Activated CD8-positive, alpha-beta T cell treated with anti-CD3 and anti-CD28 coated beads for 36 hours (primary cell): ENCODE measurements at regions of chr3 and their contacts with region 1.

Region 1: DNA sequence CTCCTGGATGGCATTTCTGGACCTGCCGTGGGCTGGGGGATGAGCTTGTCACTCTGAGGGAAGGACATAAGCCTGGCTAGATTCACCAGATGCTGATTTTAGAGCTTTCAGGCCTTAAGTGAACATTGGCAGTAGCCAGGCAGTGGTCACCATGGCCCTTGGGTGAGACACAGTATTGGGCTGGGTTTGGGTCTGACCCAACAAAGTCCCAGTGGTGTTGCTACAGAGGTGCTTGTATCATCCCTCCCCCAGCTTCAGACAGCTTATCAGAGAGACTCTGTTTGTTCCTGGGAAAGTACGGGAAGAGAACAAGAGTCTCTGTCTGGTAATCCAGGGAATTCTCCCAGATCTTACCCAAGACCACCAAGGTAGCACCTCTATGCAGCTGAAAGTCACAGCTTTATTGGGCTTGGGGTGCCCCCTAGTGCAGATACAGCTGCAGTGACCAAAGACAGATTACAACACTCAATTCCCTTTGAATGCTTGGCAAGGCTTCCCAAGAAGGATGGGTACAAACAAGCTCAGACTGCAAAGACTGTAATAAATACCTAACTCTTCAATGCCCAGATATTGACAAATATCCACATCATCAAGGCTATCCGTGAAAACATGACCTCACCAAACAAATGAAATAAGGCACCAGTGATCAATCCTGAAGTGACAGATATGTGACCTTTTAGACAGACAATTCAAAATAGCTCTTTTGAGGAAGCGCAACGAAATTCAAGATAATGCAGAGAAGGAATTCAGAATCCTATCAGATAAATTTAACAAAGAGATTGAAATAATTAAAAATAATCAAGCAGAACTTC is 9.9 kb upstream of the RUVBL1 start:
- DNase-seq: peak; percentile 60
- ATAC-seq: peak; percentile 55
- H3K4me3 Mint-ChIP-seq: no peak overlapping the region
- H3K27ac Mint-ChIP-seq: no peak overlapping the region
- H3K4me1 Mint-ChIP-seq: no peaks in the 10 kb centered on the region
- H3K27me3 Mint-ChIP-seq: no peaks in the 10 kb centered on the region
- CTCF ChIP-seq: peak; percentile 68

Region 2: GRCh38 chr3:128033102-128033501 is 100.4 kb before region 1 on chr3:
- CTCF ChIA-PET with region 1: no interaction called
- POLR2A ChIA-PET with region 1: no interaction called
- intact Hi-C with region 1: no loop called
- DNase-seq: no peak
- ATAC-seq: no peak
- H3K4me3 Mint-ChIP-seq: no peak overlapping the region
- H3K27ac Mint-ChIP-seq: no peak overlapping the region
- H3K4me1 Mint-ChIP-seq: no peaks in the 10 kb centered on the region
- H3K27me3 Mint-ChIP-seq: peaks cover 4% of the 10 kb centered on the region
- CTCF ChIP-seq: no peak

Region 3: GRCh38 chr3:128050597-128050996 is 82.9 kb before region 1 on chr3:
- CTCF ChIA-PET with region 1: no interaction called
- POLR2A ChIA-PET with region 1: no interaction called
- intact Hi-C with region 1: no loop called
- DNase-seq: no peak
- ATAC-seq: no peak
- H3K4me3 Mint-ChIP-seq: no peak overlapping the region
- H3K27ac Mint-ChIP-seq: no peak overlapping the region
- H3K4me1 Mint-ChIP-seq: peaks cover 34% of the 10 kb centered on the region
- H3K27me3 Mint-ChIP-seq: no peaks in the 10 kb centered on the region
- CTCF ChIP-seq: no peak

Region 4: DNA sequence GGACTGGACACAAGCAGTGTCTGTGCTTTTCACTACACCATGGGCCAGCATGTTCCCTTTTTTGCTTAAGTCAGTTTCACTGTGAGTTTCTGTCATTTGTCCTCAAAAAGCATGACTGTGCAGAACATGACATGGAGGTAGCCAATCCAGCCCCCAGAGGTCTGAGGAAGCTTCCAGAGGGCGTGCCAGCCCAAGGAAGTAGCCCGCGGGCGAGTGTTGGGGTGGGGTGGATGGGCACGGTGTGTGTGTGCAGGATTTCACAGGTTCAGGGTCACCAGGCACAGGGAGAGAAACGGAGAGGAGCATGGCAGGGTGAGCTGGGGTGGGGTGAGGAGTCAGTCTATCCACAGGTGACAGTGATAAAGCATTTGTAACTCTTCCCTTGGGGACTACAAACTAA is 11.9 kb after region 1 on chr3:
- CTCF ChIA-PET with region 1: interaction called, 14 read pairs
- POLR2A ChIA-PET with region 1: no interaction called
- intact Hi-C with region 1: no loop called
- DNase-seq: no peak
- ATAC-seq: no peak
- H3K4me3 Mint-ChIP-seq: no peak overlapping the region
- H3K27ac Mint-ChIP-seq: no peak overlapping the region
- H3K4me1 Mint-ChIP-seq: no peaks in the 10 kb centered on the region
- H3K27me3 Mint-ChIP-seq: no peaks in the 10 kb centered on the region
- CTCF ChIP-seq: no peak

Region 5: DNA sequence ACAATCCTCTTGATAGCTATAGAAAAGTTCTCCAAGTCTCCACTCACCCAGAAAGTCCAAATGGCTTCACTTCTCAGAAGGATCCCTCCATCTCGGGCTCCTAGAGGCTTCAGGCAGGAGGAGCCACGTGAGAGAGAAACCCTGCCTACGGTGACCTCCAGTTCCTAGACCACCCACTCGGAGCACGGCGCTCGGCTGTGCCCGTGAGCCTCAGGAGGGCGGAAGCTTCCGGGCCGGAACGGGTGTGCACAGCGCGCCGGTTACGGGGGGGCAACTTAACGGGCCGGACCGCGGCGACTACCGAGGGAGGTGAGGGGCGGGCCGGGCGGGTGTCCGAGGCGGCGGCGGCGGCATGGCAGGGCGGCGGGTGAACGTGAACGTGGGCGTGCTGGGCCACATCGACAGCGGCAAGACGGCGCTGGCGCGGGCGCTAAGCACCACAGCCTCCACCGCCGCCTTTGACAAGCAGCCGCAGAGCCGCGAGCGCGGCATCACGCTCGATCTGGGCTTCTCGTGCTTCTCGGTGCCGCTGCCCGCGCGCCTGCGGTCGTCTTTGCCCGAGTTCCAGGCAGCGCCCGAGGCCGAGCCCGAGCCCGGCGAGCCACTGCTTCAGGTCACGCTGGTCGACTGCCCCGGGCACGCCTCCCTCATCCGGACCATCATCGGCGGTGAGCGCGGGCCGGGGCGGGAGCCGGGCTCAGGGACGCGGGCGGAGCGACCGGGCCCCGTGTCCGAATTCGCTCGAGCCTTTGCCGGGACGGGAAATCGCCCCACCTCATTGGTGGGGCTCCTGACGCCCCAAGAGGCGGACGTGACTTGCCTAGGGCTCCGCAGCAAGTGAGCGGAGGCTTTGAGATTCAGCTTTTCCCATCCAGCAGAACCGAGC is 19.9 kb after region 1 on chr3 and contains the start of gene EEFSEC:
- CTCF ChIA-PET with region 1: interaction called, 13 read pairs
- POLR2A ChIA-PET with region 1: no interaction called
- intact Hi-C with region 1: no loop called
- DNase-seq: peak; percentile 85
- ATAC-seq: peak; percentile 94
- H3K4me3 Mint-ChIP-seq: peak within 1 kb of the TSS; percentile 80
- H3K27ac Mint-ChIP-seq: peak within 1 kb of the TSS; percentile 97
- H3K4me1 Mint-ChIP-seq: peaks cover 12% of the 10 kb centered on the region
- H3K27me3 Mint-ChIP-seq: no peaks in the 10 kb centered on the region
- CTCF ChIP-seq: no peak
- total RNA-seq, gene EEFSEC: 19.2 to 19.6 TPM